ENCODE measurements at regions of chr17 and their contacts with region 1.

Region 1: DNA sequence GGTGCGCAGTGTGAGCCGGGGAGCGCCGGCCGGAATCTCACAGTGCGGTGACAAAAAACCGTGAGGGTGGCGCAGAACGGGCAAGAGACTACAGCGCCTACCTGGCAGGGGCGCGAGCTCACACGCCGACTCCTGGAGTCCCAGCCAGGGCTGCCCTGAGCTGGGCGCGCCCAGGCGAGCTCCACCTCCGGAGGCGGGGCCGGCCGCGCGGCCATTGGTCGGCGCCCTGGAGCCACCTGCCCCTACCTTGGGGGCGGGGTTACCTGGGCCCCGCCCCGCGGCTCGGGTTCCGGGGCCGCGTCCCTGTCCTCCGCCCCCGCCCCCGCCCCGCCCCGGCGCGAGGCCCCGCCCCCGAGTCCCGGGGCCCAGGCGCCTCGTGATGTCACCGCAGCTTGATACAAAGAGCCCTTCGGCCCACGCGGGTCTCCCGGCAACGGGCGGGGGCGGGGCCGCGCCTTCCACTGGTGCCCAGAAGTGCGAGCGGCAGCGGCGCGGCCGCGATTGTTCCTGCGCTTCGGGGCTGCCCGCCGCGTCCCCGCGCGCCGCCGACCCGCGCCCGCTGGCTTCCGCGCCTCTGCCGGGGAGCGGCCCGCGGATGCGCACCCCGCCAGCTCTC is 96.3 kb downstream of the RAB11FIP4 start:
- DNase-seq: peak; percentile 95 to 96
- H3K4me3 ChIP-seq: peak overlapping the region; percentile 84
- H3K4me3 Mint-ChIP-seq: peak overlapping the region; percentile 86
- H3K27ac Mint-ChIP-seq: peak overlapping the region; percentile 97
- H3K4me1 ChIP-seq: peaks cover 33% of the 10 kb centered on the region
- H3K4me1 Mint-ChIP-seq: peaks cover 45% of the 10 kb centered on the region
- H3K27me3 ChIP-seq: no peaks in the 10 kb centered on the region
- H3K27me3 Mint-ChIP-seq: no peaks in the 10 kb centered on the region
- CTCF ChIP-seq: peak in 1 of 2 experiments; percentile 40

Region 2: GRCh38 chr17:31371511-31372097 is 116.2 kb before region 1 on chr17:
- CTCF ChIA-PET with region 1: no interaction called
- POLR2A ChIA-PET with region 1: no interaction called
- intact Hi-C with region 1: no loop called
- DNase-seq: no peak
- H3K4me3 ChIP-seq: no peak overlapping the region
- H3K4me3 Mint-ChIP-seq: no peak overlapping the region
- H3K27ac Mint-ChIP-seq: no peak overlapping the region
- H3K4me1 ChIP-seq: no peaks in the 10 kb centered on the region
- H3K4me1 Mint-ChIP-seq: no peaks in the 10 kb centered on the region
- H3K27me3 ChIP-seq: no peaks in the 10 kb centered on the region
- H3K27me3 Mint-ChIP-seq: no peaks in the 10 kb centered on the region
- CTCF ChIP-seq: no peak

Region 3: GRCh38 chr17:31457391-31458234 is 30.1 kb before region 1 on chr17:
- CTCF ChIA-PET with region 1: interaction called, 12 read pairs
- POLR2A ChIA-PET with region 1: interaction called, 17 read pairs
- intact Hi-C with region 1: loop called (anchors 1 kb)
- DNase-seq: peak; percentile 89 to 95
- H3K4me3 ChIP-seq: 0 out of 2 replicates have a peak overlapping the region, but pooled peaks have one; percentile 6
- H3K4me3 Mint-ChIP-seq: peak overlapping the region; percentile 56
- H3K27ac Mint-ChIP-seq: peak overlapping the region; percentile 87
- H3K4me1 ChIP-seq: peaks cover 55% of the 10 kb centered on the region
- H3K4me1 Mint-ChIP-seq: peaks cover 35% of the 10 kb centered on the region
- H3K27me3 ChIP-seq: no peaks in the 10 kb centered on the region
- H3K27me3 Mint-ChIP-seq: no peaks in the 10 kb centered on the region
- CTCF ChIP-seq: no peak

Region 4: DNA sequence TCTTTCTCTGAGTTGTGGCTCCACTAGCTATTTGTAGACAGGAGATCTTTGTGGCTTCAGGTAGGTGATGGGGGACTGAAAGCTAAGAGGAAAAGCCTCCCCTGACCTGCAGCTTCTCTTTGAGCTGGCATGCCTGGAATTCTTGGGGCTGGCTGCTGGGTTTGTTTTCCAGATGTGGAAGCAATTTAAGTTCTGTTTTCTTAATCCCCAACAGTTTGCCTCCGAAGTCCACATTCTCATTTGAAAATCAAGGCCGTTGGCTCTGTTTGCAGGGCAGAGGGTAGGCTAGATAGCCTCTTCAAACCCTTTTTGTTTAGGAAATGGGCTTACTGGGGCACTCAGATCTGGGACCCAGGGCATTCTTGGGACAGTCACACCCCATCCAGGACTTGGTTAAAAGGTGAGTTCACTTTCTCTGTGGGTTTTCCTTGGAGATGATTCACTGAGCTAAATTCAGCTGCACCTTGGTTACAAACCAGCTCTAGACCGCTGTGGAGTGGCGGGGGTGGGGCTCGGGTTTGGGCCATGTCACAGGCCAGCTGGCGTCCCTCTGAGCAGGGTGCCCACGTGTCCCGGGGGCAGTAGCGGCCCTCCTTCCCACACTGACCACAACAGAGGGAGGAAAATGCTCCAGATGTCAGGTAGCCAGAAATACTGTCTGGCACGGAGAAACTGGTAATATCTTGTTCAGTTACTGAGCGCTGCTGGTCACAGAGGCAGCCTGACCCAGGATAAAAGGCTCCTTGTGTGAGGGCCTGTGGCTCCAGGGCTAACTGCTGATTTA is 12.2 kb after region 1 on chr17:
- CTCF ChIA-PET with region 1: interaction called, 5 read pairs
- POLR2A ChIA-PET with region 1: interaction called, 24 read pairs
- intact Hi-C with region 1: loop called (anchors 1 kb)
- DNase-seq: peak in 1 of 2 experiments; percentile 58
- H3K4me3 ChIP-seq: no peak overlapping the region
- H3K4me3 Mint-ChIP-seq: peak overlapping the region; percentile 37
- H3K27ac Mint-ChIP-seq: peak overlapping the region; percentile 80
- H3K4me1 ChIP-seq: peaks cover 61% of the 10 kb centered on the region
- H3K4me1 Mint-ChIP-seq: peaks cover 31% of the 10 kb centered on the region
- H3K27me3 ChIP-seq: no peaks in the 10 kb centered on the region
- H3K27me3 Mint-ChIP-seq: no peaks in the 10 kb centered on the region
- CTCF ChIP-seq: no peak

Region 5: DNA sequence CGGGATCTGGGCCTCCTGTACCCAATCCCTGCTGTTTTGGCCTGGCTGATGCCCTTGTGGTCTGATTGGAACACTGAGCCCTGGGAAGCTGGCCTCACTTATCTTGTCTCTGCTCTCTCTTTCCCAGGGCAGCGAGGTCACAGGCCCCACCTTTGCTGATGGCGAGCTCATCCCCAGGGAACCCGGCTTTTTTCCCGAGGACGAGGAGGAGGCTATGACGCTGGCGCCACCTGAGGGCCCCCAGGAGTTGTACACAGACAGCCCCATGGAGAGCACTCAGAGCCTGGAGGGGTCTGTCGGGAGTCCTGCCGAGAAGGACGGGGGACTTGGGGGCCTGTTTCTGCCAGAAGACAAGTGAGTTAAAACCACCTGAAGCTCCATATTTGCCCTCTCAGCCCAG is 29.8 kb after region 1 on chr17:
- CTCF ChIA-PET with region 1: interaction called, 22 read pairs
- POLR2A ChIA-PET with region 1: interaction called, 6 read pairs
- intact Hi-C with region 1: loop called (anchors 2 kb)
- DNase-seq: peak; percentile 70 to 75
- H3K4me3 ChIP-seq: no peak overlapping the region
- H3K4me3 Mint-ChIP-seq: no peak overlapping the region
- H3K27ac Mint-ChIP-seq: no peak overlapping the region
- H3K4me1 ChIP-seq: peaks cover 17% of the 10 kb centered on the region
- H3K4me1 Mint-ChIP-seq: peaks cover 6% of the 10 kb centered on the region
- H3K27me3 ChIP-seq: no peaks in the 10 kb centered on the region
- H3K27me3 Mint-ChIP-seq: no peaks in the 10 kb centered on the region
- CTCF ChIP-seq: peak; percentile 69 to 82

Measured in Caco-2 (cell line).